ENCODE measurements at regions of chr10 and their contacts with region 1.

Region 1: DNA sequence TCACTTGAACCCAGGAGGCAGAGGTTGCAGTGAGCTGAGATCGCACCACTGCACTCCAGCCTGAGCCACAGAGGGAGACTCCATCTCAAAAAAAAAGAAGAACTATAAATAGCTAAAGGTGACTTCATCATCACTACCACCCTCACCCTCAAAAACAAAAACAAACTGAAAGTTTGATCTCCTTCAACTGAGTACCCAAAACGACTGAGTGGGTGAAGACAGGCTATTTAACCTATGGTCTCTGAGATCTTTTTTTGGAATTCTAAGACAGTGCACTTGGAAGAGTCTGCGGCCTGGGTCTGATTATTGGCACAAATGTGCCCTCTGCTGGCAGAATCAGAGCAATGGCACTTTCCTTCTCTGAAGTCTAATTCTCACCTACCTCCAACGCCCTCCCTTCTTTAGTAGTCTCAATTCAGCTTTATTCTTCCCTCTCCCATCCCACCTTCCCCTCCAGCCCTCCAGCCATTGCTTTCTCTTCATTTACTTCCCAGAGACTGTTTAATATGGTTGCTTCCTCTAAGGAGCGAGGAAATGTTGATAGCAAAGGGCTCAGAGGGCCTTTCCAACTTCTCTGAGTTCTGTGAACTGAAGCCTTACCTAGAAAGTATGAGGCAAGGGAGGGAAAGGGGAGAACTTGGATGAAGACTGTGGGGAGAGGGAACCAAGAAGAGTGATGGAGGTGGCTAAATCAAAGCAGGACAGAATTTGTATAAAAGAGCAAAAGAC is 2.9 kb upstream of the MYOZ1 start:
- DNase-seq: peak; percentile 77
- H3K4me3 ChIP-seq: no peak overlapping the region
- H3K27ac ChIP-seq: no peak overlapping the region
- H3K4me1 ChIP-seq: peaks cover 5% of the 10 kb centered on the region
- CTCF ChIP-seq: peak; percentile 98

Region 2: GRCh38 chr10:73263948-73264347 is 380.2 kb before region 1 on chr10:
- CTCF ChIA-PET with region 1: no interaction called
- POLR2A ChIA-PET with region 1: no interaction called
- intact Hi-C with region 1: loop called (anchors 1 kb)
- DNase-seq: peak; percentile 37
- H3K4me3 ChIP-seq: no peak overlapping the region
- H3K27ac ChIP-seq: no peak overlapping the region
- H3K4me1 ChIP-seq: no peaks in the 10 kb centered on the region
- CTCF ChIP-seq: peak; percentile 90

Measured in OCI-LY7 (cell line).